Breast epithelium (tissue), 4 donors: ENCODE measurements at regions of chr13 and their contacts with region 1.

Region 1: GRCh38 chr13:29005763-29006120 is 185.6 kb downstream of the MTUS2 start:
- DNase-seq: no peak
- H3K4me3 ChIP-seq: no peak overlapping the region
- H3K27ac ChIP-seq: no peak overlapping the region
- H3K4me1 ChIP-seq: no peaks in the 10 kb centered on the region
- H3K27me3 ChIP-seq: no peaks in the 10 kb centered on the region
- CTCF ChIP-seq: no peak
- POLR2A ChIP-seq: no peak

Region 2: DNA sequence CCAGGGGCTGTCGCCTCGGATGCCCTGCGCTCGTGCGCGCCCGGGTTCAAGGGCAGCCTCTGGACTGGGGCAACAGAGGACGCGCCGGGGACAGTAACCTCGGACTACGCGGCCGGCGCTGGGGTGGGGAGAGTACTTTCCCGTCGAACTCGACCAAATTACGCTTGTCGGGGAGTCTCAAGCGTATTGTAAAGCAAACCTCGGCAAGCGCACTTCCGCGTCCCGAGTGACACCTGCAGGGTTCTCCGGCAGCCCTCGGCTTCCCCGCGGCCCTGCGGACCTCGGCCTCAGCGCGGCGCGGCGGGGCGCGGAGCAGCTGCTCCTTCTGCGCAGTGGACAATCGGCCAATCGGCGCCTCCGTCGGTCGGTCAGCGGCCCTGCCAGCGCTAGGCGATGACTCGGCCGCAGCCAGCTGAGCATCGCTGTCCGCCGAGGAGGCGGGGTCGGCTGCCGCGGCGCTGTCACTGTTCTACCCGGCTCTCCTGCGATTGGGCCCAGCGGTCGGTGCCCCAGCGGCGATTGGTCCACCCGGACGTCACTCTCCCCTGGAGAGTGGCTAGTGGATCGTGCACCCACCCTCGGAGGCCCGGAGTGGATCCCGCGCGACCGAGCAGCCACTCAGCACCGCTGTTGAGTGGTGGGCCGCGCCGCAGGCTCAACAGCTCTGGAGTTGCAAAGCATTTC is 287.1 kb before region 1 on chr13 and contains the start of gene SLC46A3:
- intact Hi-C with region 1: no loop called
- DNase-seq: peak; percentile 95 to 97
- H3K4me3 ChIP-seq: peak within 1 kb of the TSS; percentile 70 to 78 (median 73)
- H3K27ac ChIP-seq: peak within 1 kb of the TSS; percentile 91 to 92
- H3K4me1 ChIP-seq: no peaks in the 10 kb centered on the region
- H3K27me3 ChIP-seq: no peaks in the 10 kb centered on the region
- CTCF ChIP-seq: no peak
- POLR2A ChIP-seq: peak; percentile 11
- total RNA-seq, gene SLC46A3: 17.1 to 29.7 (median 25.6) TPM

Region 3: DNA sequence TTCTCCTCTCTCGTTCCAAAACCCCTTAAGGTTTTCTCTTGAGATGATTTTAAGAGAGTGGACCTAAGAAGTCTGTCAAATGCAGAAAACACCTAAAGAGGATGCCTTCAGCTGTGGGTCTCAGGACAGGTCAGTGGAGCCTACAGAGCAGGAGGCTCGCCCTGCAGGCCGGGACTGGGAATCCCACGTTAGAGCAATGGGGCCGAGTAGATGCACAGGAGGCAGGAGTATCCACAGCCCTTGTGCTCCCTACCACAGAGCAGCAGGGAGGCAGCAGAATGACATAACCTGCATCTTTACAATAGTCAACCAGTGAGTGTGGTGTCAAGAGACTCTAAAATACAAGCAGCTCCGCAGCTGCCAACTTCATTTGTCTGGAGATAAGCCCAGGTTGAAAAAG is 43.8 kb after region 1 on chr13:
- intact Hi-C with region 1: loop called (anchors 2 kb)
- DNase-seq: no peak
- H3K4me3 ChIP-seq: no peak overlapping the region
- H3K27ac ChIP-seq: no peak overlapping the region
- H3K4me1 ChIP-seq: no peaks in the 10 kb centered on the region
- H3K27me3 ChIP-seq: no peaks in the 10 kb centered on the region
- CTCF ChIP-seq: no peak
- POLR2A ChIP-seq: no peak

Region 4: DNA sequence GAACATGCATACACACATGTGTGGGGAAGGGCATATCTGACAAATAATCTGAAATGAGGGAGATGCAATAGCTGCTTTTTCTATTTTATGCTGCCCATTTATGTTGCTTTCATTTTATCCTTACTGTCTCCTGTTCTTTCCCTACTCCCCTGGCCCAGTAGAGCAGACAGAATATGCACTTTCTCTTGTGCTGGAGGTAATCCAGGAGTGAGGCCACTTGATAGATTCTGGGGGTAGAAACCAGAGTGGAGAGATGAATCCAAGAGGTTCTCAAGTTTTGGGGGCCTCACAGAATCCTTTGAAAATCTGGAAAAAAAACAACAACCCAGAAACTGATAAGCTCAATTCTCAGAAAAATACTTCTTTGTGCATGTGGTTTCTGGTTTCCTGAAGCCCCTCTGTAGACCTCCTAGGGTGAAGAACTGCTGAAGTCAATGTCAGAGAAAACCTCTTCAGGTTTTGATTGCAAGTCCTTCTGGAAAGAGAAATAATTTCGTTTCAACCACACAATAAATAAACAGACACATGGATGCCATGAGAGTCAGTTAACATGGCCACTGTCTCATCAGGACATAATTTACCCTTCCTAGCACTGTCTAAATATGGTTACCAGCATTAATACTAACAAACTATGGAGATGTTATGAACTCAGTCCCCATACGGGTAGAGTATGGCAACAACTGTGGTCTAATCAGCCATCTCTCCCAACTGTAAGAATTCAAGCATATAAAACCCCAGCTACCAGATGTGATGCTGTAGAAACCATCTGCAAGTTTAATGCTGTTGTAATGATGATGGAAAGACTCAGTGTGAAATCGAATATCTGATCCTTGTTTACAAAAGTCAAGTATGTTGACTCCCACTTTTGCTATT is 234.1 kb after region 1 on chr13:
- intact Hi-C with region 1: loop called (anchors 5 kb)
- DNase-seq: no peak
- H3K4me3 ChIP-seq: no peak overlapping the region
- H3K27ac ChIP-seq: no peak overlapping the region
- H3K4me1 ChIP-seq: no peaks in the 10 kb centered on the region
- H3K27me3 ChIP-seq: peaks cover 0 to 3% of the 10 kb centered on the region in 2 donors
- CTCF ChIP-seq: no peak
- POLR2A ChIP-seq: no peak